Prostate gland (tissue), 2 donors: ENCODE measurements at regions of chr16 and their contacts with region 1.

Region 1: GRCh38 chr16:31032736-31033708 is at the start of gene STX4:
- DNase-seq: peak; percentile 96
- H3K4me3 ChIP-seq: peak within 1 kb of the TSS; percentile 56 to 97
- H3K27ac ChIP-seq: peak within 1 kb of the TSS; percentile 88 to 92
- H3K4me1 ChIP-seq: peaks cover 5% of the 10 kb centered on the region
- H3K27me3 ChIP-seq: no peaks in the 10 kb centered on the region
- CTCF ChIP-seq: peak in 2 of 4 experiments; percentile 25 to 30
- POLR2A ChIP-seq: peak; percentile 58
- total RNA-seq, gene STX4: 40.7 to 51.7 TPM

Region 2: DNA sequence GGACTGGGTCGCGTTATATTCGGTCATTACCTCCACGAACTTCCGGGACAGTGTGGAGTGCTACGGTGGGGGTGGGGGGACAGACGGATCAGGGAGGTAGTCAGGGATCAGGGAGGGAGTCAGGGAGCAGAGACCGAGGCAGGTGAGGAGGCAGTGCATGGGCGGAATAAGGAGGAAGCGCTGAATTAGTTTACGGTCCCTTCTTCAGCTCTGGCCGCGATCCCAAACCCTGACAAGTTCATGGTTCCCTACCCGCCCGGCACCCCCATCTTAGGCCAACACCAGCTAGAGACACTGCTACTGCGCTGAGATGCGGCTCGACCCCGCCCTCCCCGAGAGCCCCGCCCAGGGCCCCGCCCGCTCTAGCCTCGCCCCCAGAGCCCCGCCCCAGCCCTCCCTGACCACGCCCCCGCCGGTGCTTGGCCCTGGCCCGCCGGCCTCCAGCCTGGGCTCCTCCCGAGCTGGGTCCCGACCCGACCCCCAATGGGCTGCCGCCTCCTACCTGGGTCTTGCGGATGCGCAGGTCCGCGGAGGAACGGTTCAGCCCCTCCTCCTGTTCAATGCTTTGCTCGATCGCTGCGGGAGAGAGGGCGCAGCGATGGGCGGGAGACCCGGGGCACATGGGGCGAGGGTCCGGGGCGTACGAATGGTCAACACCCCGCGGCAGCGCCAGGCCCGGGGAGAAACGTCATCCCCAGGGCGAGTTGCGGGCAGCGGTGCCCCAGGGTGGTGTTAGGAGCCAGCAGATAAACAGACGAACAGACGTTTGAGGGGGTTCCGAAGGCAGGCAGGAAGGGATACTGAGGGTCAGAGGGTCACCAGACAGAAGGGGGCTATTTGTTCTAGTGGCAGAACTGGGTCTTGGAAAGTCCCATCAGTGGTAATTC is 35.8 kb before region 1 on chr16:
- intact Hi-C with region 1: loop called (anchors 5 kb)
- DNase-seq: peak; percentile 68
- H3K4me3 ChIP-seq: peak overlapping the region; percentile 29 to 38
- H3K27ac ChIP-seq: peak overlapping the region; percentile 36 to 38
- H3K4me1 ChIP-seq: no peaks in the 10 kb centered on the region
- H3K27me3 ChIP-seq: no peaks in the 10 kb centered on the region
- CTCF ChIP-seq: no peak
- POLR2A ChIP-seq: no peak

Region 3: GRCh38 chr16:31073968-31074813 is 41.2 kb after region 1 on chr16 and contains the starts of genes ZNF646 and ZNF668:
- intact Hi-C with region 1: loop called (anchors 5 kb)
- DNase-seq: peak; percentile 99
- H3K4me3 ChIP-seq: peak within 1 kb of the TSS; percentile 97 to 99
- H3K27ac ChIP-seq: peak within 1 kb of the TSS; percentile 91 to 94
- H3K4me1 ChIP-seq: peaks cover 10% of the 10 kb centered on the region
- H3K27me3 ChIP-seq: no peaks in the 10 kb centered on the region
- CTCF ChIP-seq: peak in 1 of 4 experiments; percentile 10
- POLR2A ChIP-seq: peak; percentile 55
- total RNA-seq, gene ZNF646: 26.3 to 33.7 TPM
- total RNA-seq, gene ZNF668: 15.6 to 21.4 TPM

Region 4: GRCh38 chr16:31157136-31157535 is 124.1 kb after region 1 on chr16:
- intact Hi-C with region 1: no loop called
- DNase-seq: no peak
- H3K4me3 ChIP-seq: no peak overlapping the region
- H3K27ac ChIP-seq: no peak overlapping the region
- H3K4me1 ChIP-seq: no peaks in the 10 kb centered on the region
- H3K27me3 ChIP-seq: no peaks in the 10 kb centered on the region
- CTCF ChIP-seq: no peak
- POLR2A ChIP-seq: no peak

Region 5: DNA sequence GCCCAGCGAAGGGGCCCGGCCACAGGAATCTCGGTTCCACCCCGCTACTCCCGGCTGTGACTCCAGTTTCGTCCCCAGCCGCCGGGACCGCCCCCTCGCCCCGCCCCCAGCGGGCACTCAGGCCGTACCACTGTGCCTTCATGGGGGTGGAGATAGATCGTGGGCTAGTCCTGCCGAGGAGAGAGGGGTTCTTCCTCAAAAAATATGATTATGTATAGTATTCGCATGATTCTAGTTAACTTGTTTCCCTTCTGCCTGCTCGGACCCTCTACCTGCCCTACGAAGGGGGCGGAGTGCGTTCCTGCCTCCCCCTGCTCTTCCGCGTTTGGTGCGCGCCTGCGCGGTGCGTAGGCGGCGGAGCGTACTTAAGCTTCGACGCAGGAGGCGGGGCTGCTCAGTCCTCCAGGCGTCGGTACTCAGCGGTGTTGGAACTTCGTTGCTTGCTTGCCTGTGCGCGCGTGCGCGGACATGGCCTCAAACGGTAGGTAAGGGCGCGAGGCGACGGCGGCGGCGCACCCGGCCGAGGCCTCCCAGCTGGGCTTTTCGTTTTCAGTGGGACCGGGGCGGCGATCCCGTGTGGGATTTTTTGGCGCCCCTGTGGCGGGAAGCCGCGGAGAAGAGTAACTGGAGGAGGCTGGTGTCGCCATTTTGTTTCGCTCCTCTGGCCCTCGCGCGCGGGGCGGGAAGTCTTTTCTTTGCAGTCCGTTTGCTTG is 146.9 kb after region 1 on chr16 and contains the start of gene FUS:
- intact Hi-C with region 1: loop called (anchors 5 kb)
- DNase-seq: peak; percentile 90
- H3K4me3 ChIP-seq: peak within 1 kb of the TSS; percentile 95 to 99
- H3K27ac ChIP-seq: peak within 1 kb of the TSS; percentile 98
- H3K4me1 ChIP-seq: peaks cover 18% of the 10 kb centered on the region
- H3K27me3 ChIP-seq: no peaks in the 10 kb centered on the region
- CTCF ChIP-seq: peak in 1 of 4 experiments; percentile 4
- POLR2A ChIP-seq: peak; percentile 91
- total RNA-seq, gene FUS: 48.6 to 87.5 TPM

Region 6: DNA sequence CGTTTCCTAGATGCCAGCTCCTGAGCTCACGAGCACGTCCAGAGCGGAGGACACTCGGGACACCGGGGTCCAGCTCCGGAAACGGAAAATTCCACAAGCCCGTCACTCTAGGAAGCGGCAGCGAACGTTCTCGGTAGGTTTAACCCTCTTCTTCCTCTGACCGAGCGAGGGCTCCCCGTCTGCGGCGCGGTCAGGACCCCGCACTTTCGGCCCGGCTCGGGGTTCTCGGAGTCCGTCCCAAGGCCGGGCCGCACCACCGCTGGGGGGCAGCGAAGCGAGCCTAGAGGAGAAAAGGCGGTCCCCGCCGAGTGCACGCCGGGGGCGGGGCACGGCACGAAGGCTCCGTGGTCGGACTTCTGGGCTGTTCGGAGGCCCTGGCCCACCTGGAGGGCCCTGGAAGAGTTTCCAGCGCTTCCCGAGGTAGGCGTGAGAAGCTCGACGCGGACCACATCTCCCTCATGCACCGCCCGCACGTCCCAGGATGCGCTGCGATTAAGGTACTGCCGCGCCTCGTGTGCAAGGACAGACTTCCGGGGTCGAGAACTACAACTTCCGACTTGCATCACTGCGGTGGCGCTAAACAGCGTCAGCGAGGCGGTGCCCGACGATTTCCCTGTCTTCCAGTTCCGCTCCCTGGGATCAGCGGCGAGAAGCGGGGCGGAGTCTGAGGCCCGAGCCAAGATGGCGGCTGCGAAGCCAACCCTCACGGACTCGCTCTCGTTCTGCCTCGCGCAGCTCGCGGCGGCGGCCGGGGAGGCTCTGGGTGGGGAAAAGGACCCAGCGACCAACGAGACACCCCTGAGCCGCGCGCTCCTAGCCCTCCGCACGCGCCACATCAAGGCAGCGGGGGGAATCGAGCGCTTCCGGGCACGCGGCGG is 426.1 kb after region 1 on chr16 and contains the start of gene ARMC5:
- intact Hi-C with region 1: loop called (anchors 5 kb)
- DNase-seq: peak; percentile 98
- H3K4me3 ChIP-seq: peak within 1 kb of the TSS; percentile 75 to 85
- H3K27ac ChIP-seq: peak within 1 kb of the TSS; percentile 98 to 99
- H3K4me1 ChIP-seq: peaks cover 20% of the 10 kb centered on the region
- H3K27me3 ChIP-seq: no peaks in the 10 kb centered on the region
- CTCF ChIP-seq: peak; percentile 35 to 72 (median 62)
- POLR2A ChIP-seq: no peak
- total RNA-seq, gene ARMC5: 10.0 to 20.3 TPM